Activated T-helper 1 cell treated with anti-CD3 and anti-CD28 coated beads, Interleukin-12 subunit alpha, Interleukin-12 subunit beta, Interleukin-2, Interleukin-4 antibody, amounts not matched to agents 30 ng/mL and 10 ng/mL and 1 ng/mL, durations not matched to agents 14 hours and 24 hours and 36 hours (primary cell): ENCODE measurements at regions of chr9 and their contacts with region 1.

Region 1: DNA sequence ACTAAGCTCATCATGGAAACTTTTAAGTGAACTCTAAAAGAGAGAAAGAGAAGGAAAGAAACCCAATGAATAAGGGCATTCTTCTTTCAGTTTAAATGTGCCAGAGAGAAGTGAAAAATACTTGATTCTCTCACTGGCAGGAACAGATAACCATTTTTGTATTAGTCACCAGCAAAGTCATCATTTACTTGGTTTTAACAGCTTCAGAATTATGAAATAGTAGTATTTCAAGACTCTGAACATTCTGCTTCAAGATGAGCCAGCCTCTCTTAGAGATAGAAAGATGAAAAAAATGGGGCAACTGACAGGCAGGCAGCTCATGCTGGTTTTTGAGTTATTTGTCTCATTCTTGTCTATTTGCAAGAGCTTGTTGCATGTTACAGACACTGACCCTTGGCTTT is 103.5 kb downstream of the GCNT1 start:
- DNase-seq: no peak
- H3K4me3 Mint-ChIP-seq: no peak overlapping the region
- H3K27ac Mint-ChIP-seq: peak overlapping the region; percentile 67
- H3K4me1 Mint-ChIP-seq: peaks cover 5% of the 10 kb centered on the region
- H3K27me3 Mint-ChIP-seq: peaks cover 5% of the 10 kb centered on the region

Region 2: DNA sequence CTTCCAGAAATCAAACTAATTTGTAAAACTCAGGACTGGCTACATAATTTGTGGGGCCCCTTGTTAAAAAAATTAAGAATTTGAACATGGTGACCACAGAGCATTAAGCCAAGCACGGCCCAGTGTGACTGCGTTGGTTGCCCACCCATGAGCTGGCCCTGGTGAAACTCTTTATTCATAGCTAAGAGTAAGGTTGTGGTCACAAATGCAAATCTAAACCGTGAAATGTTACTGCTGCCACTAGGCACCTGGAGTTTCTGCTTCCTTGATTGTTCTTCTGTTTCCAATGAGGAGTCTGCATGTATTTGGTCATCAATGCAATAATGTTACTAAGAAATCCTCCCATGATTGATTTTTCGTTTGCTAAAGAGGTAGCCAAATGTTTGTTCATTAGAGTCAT is 99.3 kb before region 1 on chr9:
- intact Hi-C with region 1: no loop called
- DNase-seq: no peak
- H3K4me3 Mint-ChIP-seq: no peak overlapping the region
- H3K27ac Mint-ChIP-seq: no peak overlapping the region
- H3K4me1 Mint-ChIP-seq: peaks cover 35% of the 10 kb centered on the region
- H3K27me3 Mint-ChIP-seq: no peaks in the 10 kb centered on the region

Region 3: DNA sequence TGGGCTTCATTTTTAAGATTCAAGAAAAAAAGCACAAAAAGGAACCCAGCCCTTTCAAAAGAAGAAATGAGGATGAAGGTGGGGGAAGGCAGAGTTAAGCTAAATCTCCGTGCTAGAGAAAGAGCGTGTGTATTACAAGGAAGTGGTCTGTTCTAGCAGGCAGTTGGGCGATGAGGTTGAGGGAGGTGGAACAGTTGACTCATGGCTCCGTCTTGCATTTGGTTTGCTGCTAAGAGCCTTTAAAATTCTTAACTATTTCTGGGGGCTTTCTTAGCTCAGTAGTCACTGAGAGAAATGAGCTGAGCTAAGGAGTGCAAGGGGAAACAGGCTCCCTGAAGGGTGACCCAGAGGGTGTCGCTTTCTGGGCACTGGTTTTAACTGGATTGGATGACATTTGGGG is 13.8 kb after region 1 on chr9:
- intact Hi-C with region 1: loop called (anchors 2 kb)
- DNase-seq: peak; percentile 59
- H3K4me3 Mint-ChIP-seq: peak overlapping the region; percentile 25
- H3K27ac Mint-ChIP-seq: peak overlapping the region; percentile 89
- H3K4me1 Mint-ChIP-seq: peaks cover 34% of the 10 kb centered on the region
- H3K27me3 Mint-ChIP-seq: peaks cover 1% of the 10 kb centered on the region

Region 4: DNA sequence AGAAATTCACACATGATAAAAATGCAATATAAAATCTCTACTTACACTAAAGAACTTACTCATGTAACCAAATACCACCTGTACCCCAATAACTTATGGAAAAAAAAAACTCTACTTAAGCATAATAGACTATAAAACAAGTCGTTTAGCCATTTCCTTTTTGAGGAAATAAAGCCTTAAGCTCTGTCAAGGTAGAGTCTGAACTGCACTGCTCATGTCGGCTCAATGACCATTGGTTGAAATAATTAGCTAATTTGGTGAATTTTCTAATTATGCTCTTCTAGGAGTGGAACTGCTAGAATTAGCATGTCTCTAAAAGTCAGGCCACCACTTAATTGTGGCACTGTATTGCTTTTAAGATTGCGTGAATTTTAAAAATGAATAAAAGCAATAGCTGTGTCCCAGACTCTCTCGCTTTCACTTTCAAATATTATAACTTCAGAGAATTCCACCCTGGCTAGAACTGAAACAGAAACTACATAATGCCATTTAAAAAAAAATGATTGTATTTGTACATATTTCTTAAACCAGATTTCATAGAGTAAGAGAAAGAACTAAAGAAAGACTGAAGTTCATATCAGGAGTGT is 88.7 kb after region 1 on chr9:
- intact Hi-C with region 1: loop called (anchors 5 kb)
- DNase-seq: no peak
- H3K4me3 Mint-ChIP-seq: peak overlapping the region; percentile 6
- H3K27ac Mint-ChIP-seq: no peak overlapping the region
- H3K4me1 Mint-ChIP-seq: peaks cover 32% of the 10 kb centered on the region
- H3K27me3 Mint-ChIP-seq: no peaks in the 10 kb centered on the region